ENCODE measurements at regions of chr1 and their contacts with region 1.

Region 1: GRCh38 chr1:248229360-248229908 is 1.8 kb upstream of the OR2M4 start:
- DNase-seq: no peak
- H3K4me3 ChIP-seq: no peak overlapping the region
- H3K27ac ChIP-seq: no peak overlapping the region
- H3K4me1 ChIP-seq: no peaks in the 10 kb centered on the region
- H3K27me3 ChIP-seq: no peaks in the 10 kb centered on the region
- CTCF ChIP-seq: no peak

Region 2: GRCh38 chr1:248416226-248416625 is 186.8 kb after region 1 on chr1:
- CTCF ChIA-PET with region 1: no interaction called
- dilution Hi-C with region 1: loop called (anchors 10 kb)
- in situ Hi-C with region 1: no loop called
- intact Hi-C with region 1: no loop called
- DNase-seq: no peak
- H3K4me3 ChIP-seq: no peak overlapping the region
- H3K27ac ChIP-seq: no peak overlapping the region
- H3K4me1 ChIP-seq: no peaks in the 10 kb centered on the region
- H3K27me3 ChIP-seq: no peaks in the 10 kb centered on the region
- CTCF ChIP-seq: no peak